Sciatic nerve (tissue), 2 donors: ENCODE measurements at regions of chr1 and their contacts with region 1.

Region 1: DNA sequence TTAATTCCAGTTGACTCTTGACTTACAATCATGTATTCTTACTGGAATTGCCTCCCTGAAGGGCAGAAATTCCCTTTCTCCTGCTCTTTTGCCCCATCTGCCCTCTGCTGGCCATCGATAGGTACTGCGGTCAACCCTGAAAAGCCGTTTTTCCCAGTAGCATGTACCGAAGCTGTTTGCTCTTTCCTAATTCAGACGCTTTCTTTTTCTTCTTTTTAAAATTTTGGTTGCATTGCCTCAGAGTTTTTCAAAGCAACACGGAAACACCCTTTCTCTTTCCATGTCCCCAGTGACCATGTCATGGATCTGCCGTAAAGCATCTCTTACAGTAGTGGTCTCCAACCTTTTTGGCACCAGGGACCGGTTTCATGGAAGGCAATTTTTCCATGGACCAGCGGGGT is 164.2 kb upstream of the C1orf21 start:
- DNase-seq: peak; percentile 69
- ATAC-seq: peak; percentile 70

Region 2: GRCh38 chr1:184082541-184083415 is 139.9 kb before region 1 on chr1:
- intact Hi-C with region 1: loop called (anchors 10 kb)
- DNase-seq: no peak
- ATAC-seq: no peak